ENCODE measurements at regions of chr17 and their contacts with region 1.

Region 1: GRCh38 chr17:60403962-60404361 is 12.0 kb upstream of the USP32 start:
- DNase-seq: no peak
- H3K4me3 ChIP-seq: no peak overlapping the region
- H3K4me3 Mint-ChIP-seq: no peak overlapping the region
- H3K27ac ChIP-seq: no peak overlapping the region
- H3K27ac Mint-ChIP-seq: no peak overlapping the region
- H3K4me1 ChIP-seq: peaks cover 11 to 18% of the 10 kb centered on the region in 2 donors
- H3K4me1 Mint-ChIP-seq: peaks cover 19% of the 10 kb centered on the region
- H3K27me3 ChIP-seq: no peaks in the 10 kb centered on the region
- H3K27me3 Mint-ChIP-seq: peaks cover 0 to 4% (median 1%) of the 10 kb centered on the region in 3 donors
- CTCF ChIP-seq: no peak

Region 2: GRCh38 chr17:60354223-60354622 is 49.7 kb before region 1 on chr17:
- intact Hi-C with region 1: loop called in 1 of 2 experiments (anchors 10 kb)
- DNase-seq: no peak
- H3K4me3 ChIP-seq: no peak overlapping the region
- H3K4me3 Mint-ChIP-seq: no peak overlapping the region
- H3K27ac ChIP-seq: peak overlapping the region in 1 of 2 donors; percentile 41
- H3K27ac Mint-ChIP-seq: peak overlapping the region in 3 of 7 donors; percentile 5 to 70 (median 10)
- H3K4me1 ChIP-seq: peaks cover 26 to 49% of the 10 kb centered on the region in 2 donors
- H3K4me1 Mint-ChIP-seq: peaks cover 46% of the 10 kb centered on the region
- H3K27me3 ChIP-seq: no peaks in the 10 kb centered on the region
- H3K27me3 Mint-ChIP-seq: no peaks in the 10 kb centered on the region
- CTCF ChIP-seq: no peak

Region 3: GRCh38 chr17:60525685-60526514 is 121.9 kb after region 1 on chr17 and contains the start of gene APPBP2:
- intact Hi-C with region 1: no loop called
- DNase-seq: peak; percentile 71 to 80 (median 76)
- H3K4me3 ChIP-seq: peak within 1 kb of the TSS; percentile 73 to 99 (median 93)
- H3K4me3 Mint-ChIP-seq: peak within 1 kb of the TSS; percentile 95 to 98
- H3K27ac ChIP-seq: peak within 1 kb of the TSS; percentile 92 to 96
- H3K27ac Mint-ChIP-seq: peak within 1 kb of the TSS; percentile 93 to 98 (median 97)
- H3K4me1 ChIP-seq: peaks cover 22 to 27% of the 10 kb centered on the region in 2 donors
- H3K4me1 Mint-ChIP-seq: peaks cover 26% of the 10 kb centered on the region
- H3K27me3 ChIP-seq: no peaks in the 10 kb centered on the region
- H3K27me3 Mint-ChIP-seq: peaks cover 0 to 2% (median 0%) of the 10 kb centered on the region in 3 donors
- CTCF ChIP-seq: no peak
- polyA plus RNA-seq, gene APPBP2: 6.4 to 14.7 (median 10.4) TPM